B cell (primary cell): ENCODE measurements at regions of chr5 and their contacts with region 1.

Region 1: GRCh38 chr5:160439205-160439600 is 17.5 kb downstream of the PTTG1 start:
- DNase-seq: peak; percentile 91
- ATAC-seq: peak; percentile 80
- H3K4me3 ChIP-seq: peak overlapping the region; percentile 44 to 83 (median 64)
- H3K4me3 Mint-ChIP-seq: peak overlapping the region; percentile 92
- H3K27ac ChIP-seq: peak overlapping the region; percentile 14 to 54
- H3K27ac Mint-ChIP-seq: peak overlapping the region; percentile 89
- H3K4me1 ChIP-seq: peaks cover 15 to 21% of the 10 kb centered on the region in 2 donors
- H3K4me1 Mint-ChIP-seq: peaks cover 40% of the 10 kb centered on the region
- H3K27me3 ChIP-seq: no peaks in the 10 kb centered on the region
- H3K27me3 Mint-ChIP-seq: no peaks in the 10 kb centered on the region
- CTCF ChIP-seq: peak; percentile 79

Region 2: DNA sequence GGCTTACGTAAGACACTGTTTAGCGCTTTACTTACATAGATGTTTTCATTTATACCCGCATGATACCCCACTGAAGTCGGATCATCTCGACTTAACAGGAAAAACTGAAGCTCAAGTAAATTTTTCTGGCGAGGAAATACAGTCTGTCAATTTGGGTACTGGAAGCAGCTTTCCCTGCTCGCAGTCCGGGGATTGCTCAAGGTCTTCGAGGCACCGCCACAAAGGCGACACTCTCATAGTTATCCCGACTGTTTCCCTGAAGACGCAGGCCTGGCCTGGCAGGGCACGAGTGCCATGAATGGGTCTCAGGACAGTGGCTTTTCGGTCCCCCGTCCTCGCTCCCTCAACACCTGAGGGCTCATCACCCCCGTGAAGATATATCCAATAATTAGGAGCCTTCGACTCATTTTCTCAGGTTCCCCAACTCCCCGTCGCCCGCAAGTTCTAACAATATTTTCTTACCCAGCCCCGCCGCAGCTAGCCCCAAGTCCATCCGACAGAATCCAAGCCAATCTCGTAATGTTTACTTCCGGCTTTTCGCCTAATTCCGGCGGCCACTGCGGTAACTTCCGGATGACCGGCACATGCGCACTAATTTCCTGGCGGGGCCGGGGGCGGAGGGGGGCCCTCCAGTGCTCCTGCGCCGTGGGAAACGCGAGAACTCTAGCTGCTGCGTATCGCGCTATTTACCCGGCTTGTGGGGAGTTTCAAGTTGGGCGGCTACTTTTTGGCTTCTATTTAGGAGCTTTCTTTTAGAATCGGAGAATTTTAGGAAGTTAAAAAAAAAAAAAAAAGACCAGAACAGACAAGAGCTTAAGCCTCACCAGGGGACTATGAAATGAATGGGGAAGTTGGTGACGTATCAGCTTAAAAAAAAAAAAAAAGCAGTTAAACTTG is 20.4 kb before region 1 on chr5 and contains the start of gene SLU7:
- CTCF ChIA-PET with region 1: interaction called, 79 read pairs
- POLR2A ChIA-PET with region 1: interaction called, 7 read pairs
- intact Hi-C with region 1: loop called (anchors 1 kb)
- DNase-seq: peak; percentile 97
- ATAC-seq: peak; percentile 73
- H3K4me3 ChIP-seq: peak within 1 kb of the TSS; percentile 72 to 99 (median 95)
- H3K4me3 Mint-ChIP-seq: peak within 1 kb of the TSS; percentile 92
- H3K27ac ChIP-seq: peak within 1 kb of the TSS; percentile 95
- H3K27ac Mint-ChIP-seq: peak within 1 kb of the TSS; percentile 91
- H3K4me1 ChIP-seq: peaks cover 32 to 41% of the 10 kb centered on the region in 2 donors
- H3K4me1 Mint-ChIP-seq: peaks cover 64% of the 10 kb centered on the region
- H3K27me3 ChIP-seq: no peaks in the 10 kb centered on the region
- H3K27me3 Mint-ChIP-seq: no peaks in the 10 kb centered on the region
- CTCF ChIP-seq: no peak
- total RNA-seq, gene SLU7: 68.3 and 83.2 TPM in 2 replicates

Region 3: DNA sequence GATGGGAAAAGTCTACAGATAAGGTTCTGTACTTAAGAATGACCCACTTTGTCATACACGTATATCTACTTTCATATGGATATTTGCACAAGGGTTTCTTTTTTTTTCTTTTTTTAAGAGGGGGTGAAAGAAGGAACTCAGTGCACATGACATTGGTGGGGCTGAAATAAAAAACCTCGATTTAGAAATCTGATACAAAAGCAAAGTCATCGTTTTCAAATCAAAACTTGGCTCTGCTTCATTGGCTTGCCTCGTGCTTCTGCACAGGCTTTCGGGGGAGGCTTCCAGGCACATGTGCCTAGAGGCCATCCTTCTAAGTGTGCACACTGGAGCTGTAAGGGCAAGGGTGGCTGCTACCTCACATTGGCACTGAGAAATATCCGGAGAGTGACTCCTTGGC is 13.6 kb after region 1 on chr5:
- CTCF ChIA-PET with region 1: interaction called, 24 read pairs
- POLR2A ChIA-PET with region 1: interaction called, 3 read pairs
- intact Hi-C with region 1: no loop called
- DNase-seq: no peak
- ATAC-seq: no peak
- H3K4me3 ChIP-seq: no peak overlapping the region
- H3K4me3 Mint-ChIP-seq: no peak overlapping the region
- H3K27ac ChIP-seq: no peak overlapping the region
- H3K27ac Mint-ChIP-seq: no peak overlapping the region
- H3K4me1 ChIP-seq: peaks cover 2 to 5% of the 10 kb centered on the region in 2 donors
- H3K4me1 Mint-ChIP-seq: peaks cover 12% of the 10 kb centered on the region
- H3K27me3 ChIP-seq: peaks cover 0 to 9% (median 0%) of the 10 kb centered on the region in 4 experiments
- H3K27me3 Mint-ChIP-seq: peaks cover 5% of the 10 kb centered on the region
- CTCF ChIP-seq: no peak

Region 4: GRCh38 chr5:160467555-160468362 is 28.6 kb after region 1 on chr5:
- CTCF ChIA-PET with region 1: interaction called, 89 read pairs
- POLR2A ChIA-PET with region 1: interaction called, 5 read pairs
- intact Hi-C with region 1: loop called (anchors 1 kb)
- DNase-seq: peak; percentile 87
- ATAC-seq: peak; percentile 85
- H3K4me3 ChIP-seq: peak overlapping the region; percentile 24 to 58 (median 40)
- H3K4me3 Mint-ChIP-seq: peak overlapping the region; percentile 93
- H3K27ac ChIP-seq: peak overlapping the region in 1 of 2 donors; percentile 60
- H3K27ac Mint-ChIP-seq: peak overlapping the region; percentile 93
- H3K4me1 ChIP-seq: peaks cover 48 to 53% of the 10 kb centered on the region in 2 donors
- H3K4me1 Mint-ChIP-seq: peaks cover 60% of the 10 kb centered on the region
- H3K27me3 ChIP-seq: peaks cover 0 to 32% (median 0%) of the 10 kb centered on the region in 4 experiments
- H3K27me3 Mint-ChIP-seq: no peaks in the 10 kb centered on the region
- CTCF ChIP-seq: no peak

Region 5: GRCh38 chr5:160488394-160489325 is 49.5 kb after region 1 on chr5:
- CTCF ChIA-PET with region 1: interaction called, 10 read pairs
- POLR2A ChIA-PET with region 1: no interaction called
- intact Hi-C with region 1: no loop called
- DNase-seq: no peak
- ATAC-seq: no peak
- H3K4me3 ChIP-seq: no peak overlapping the region
- H3K4me3 Mint-ChIP-seq: no peak overlapping the region
- H3K27ac ChIP-seq: no peak overlapping the region
- H3K27ac Mint-ChIP-seq: no peak overlapping the region
- H3K4me1 ChIP-seq: no peaks in the 10 kb centered on the region
- H3K4me1 Mint-ChIP-seq: peaks cover 16% of the 10 kb centered on the region
- H3K27me3 ChIP-seq: no peaks in the 10 kb centered on the region
- H3K27me3 Mint-ChIP-seq: no peaks in the 10 kb centered on the region
- CTCF ChIP-seq: no peak

Region 6: DNA sequence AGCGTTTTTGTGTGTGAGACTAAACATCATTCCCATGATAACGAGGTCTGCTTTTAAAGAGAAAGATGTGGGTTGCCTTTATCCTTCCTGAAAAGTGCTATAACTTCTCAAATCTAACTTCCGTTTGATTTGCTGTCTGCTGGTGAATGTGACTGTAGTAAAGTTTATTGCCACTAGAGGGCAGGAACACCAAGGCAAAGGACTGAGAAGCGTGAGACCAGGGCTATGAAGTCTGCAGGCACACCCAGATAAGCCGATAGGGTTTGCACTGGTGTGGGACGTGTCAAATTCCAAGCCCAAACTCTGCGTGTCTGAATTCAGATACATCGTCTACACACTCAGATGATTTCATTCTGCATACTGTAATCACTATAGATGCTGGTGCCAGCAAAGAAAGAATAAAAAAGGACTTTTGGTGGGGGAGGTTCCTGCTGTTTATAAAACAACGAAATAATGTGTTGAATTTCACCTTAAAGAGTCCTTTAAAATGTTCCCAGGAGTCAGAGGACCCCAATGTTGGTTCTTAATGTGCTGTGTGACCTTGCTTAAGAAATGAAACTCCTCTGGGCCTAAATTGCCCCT is 69.7 kb after region 1 on chr5:
- CTCF ChIA-PET with region 1: interaction called, 65 read pairs
- POLR2A ChIA-PET with region 1: no interaction called
- intact Hi-C with region 1: loop called (anchors 1 kb)
- DNase-seq: peak; percentile 86
- ATAC-seq: peak; percentile 88
- H3K4me3 ChIP-seq: no peak overlapping the region
- H3K4me3 Mint-ChIP-seq: no peak overlapping the region
- H3K27ac ChIP-seq: no peak overlapping the region
- H3K27ac Mint-ChIP-seq: no peak overlapping the region
- H3K4me1 ChIP-seq: peaks cover 12 to 17% of the 10 kb centered on the region in 2 donors
- H3K4me1 Mint-ChIP-seq: peaks cover 28% of the 10 kb centered on the region
- H3K27me3 ChIP-seq: peaks cover 0 to 12% (median 0%) of the 10 kb centered on the region in 4 experiments
- H3K27me3 Mint-ChIP-seq: no peaks in the 10 kb centered on the region
- CTCF ChIP-seq: peak; percentile 86

Region 7: DNA sequence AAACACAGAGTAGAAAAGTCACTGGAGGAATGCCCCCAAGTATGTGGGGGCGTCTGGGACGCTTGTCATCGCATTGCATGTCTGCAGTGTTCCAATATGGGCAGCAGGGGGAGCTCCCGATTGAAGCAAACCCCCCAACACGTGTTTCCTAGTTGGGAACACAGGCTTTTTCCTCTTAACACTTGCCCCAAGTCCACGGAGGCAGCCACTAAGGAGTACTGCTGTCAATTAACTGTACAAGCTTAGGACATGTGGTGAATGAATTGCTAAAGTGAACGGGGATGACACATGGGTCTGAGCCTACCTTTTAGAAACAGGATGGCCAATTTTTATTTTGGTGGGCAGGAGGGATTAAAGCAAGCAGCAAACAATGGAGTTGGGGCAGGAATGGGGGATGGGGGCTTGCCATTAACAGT is 1105.2 kb after region 1 on chr5:
- CTCF ChIA-PET with region 1: no interaction called
- POLR2A ChIA-PET with region 1: no interaction called
- intact Hi-C with region 1: loop called (anchors 10 kb)
- DNase-seq: no peak
- ATAC-seq: peak; percentile 43
- H3K4me3 ChIP-seq: no peak overlapping the region
- H3K4me3 Mint-ChIP-seq: no peak overlapping the region
- H3K27ac ChIP-seq: no peak overlapping the region
- H3K27ac Mint-ChIP-seq: no peak overlapping the region
- H3K4me1 ChIP-seq: peaks cover 16 to 22% of the 10 kb centered on the region in 2 donors
- H3K4me1 Mint-ChIP-seq: peaks cover 26% of the 10 kb centered on the region
- H3K27me3 ChIP-seq: peaks cover 0 to 37% (median 22%) of the 10 kb centered on the region in 4 experiments
- H3K27me3 Mint-ChIP-seq: peaks cover 42% of the 10 kb centered on the region
- CTCF ChIP-seq: peak; percentile 67